K562 (cell line): ENCODE measurements at regions of chr3 and their contacts with region 1.

Region 1: GRCh38 chr3:9749645-9750555 is at the start of gene OGG1:
- DNase-seq: peak; percentile 99 to 100 (median 99)
- ATAC-seq: peak; percentile 98
- H3K4me3 ChIP-seq: peak within 1 kb of the TSS; percentile 69
- H3K27ac ChIP-seq: peak within 1 kb of the TSS; percentile 82
- H3K4me1 ChIP-seq: peaks cover 12 to 31% of the 10 kb centered on the region in 2 experiments; a peak in 4 of 5 replicates
- H3K27me3 ChIP-seq: no peaks in the 10 kb centered on the region
- CTCF ChIP-seq: peak in 2 of 3 experiments; percentile 9 to 19; a peak in 3 of 6 replicates
- EP300 ChIP-seq: no peak; the same call in none of the 2 replicates
- POLR2A ChIP-seq: peak; percentile 87
- RAD21 ChIP-seq: peak in 1 of 2 experiments; percentile 8; a peak in 1 of 4 replicates
- polyA plus RNA-seq, gene OGG1: 6.6 to 12.0 TPM

Region 2: GRCh38 chr3:8713901-8714759 is 1035.8 kb before region 1 on chr3:
- CTCF ChIA-PET with region 1: no interaction called
- POLR2A ChIA-PET with region 1: no interaction called
- in situ Hi-C with region 1: no loop called
- intact Hi-C with region 1: no loop called
- DNase-seq: peak; percentile 53 to 70 (median 68)
- ATAC-seq: peak; percentile 99
- H3K4me3 ChIP-seq: no peak overlapping the region
- H3K27ac ChIP-seq: no peak overlapping the region
- H3K4me1 ChIP-seq: no peaks in the 10 kb centered on the region
- H3K27me3 ChIP-seq: peaks cover 3 to 62% of the 10 kb centered on the region in 2 experiments; a peak in 4 of 5 replicates
- CTCF ChIP-seq: peak; percentile 80 to 89 (median 82)
- EP300 ChIP-seq: no peak
- POLR2A ChIP-seq: no peak
- RAD21 ChIP-seq: peak; percentile 8 to 41; a peak in 3 of 4 replicates

Region 3: GRCh38 chr3:9731206-9732079 is 18.5 kb before region 1 on chr3 and contains the start of gene BRPF1:
- CTCF ChIA-PET with region 1: no interaction called
- POLR2A ChIA-PET with region 1: interaction called, 60 read pairs
- in situ Hi-C with region 1: no loop called
- intact Hi-C with region 1: loop called (anchors 1 kb)
- DNase-seq: peak; percentile 99 to 100 (median 100)
- ATAC-seq: peak; percentile 97
- H3K4me3 ChIP-seq: peak within 1 kb of the TSS; percentile 93
- H3K27ac ChIP-seq: peak within 1 kb of the TSS; percentile 100
- H3K4me1 ChIP-seq: peaks cover 34 to 36% of the 10 kb centered on the region in 2 experiments
- H3K27me3 ChIP-seq: no peaks in the 10 kb centered on the region
- CTCF ChIP-seq: peak in 1 of 3 experiments; percentile 3; a peak in 1 of 6 replicates
- EP300 ChIP-seq: peak; percentile 99
- POLR2A ChIP-seq: peak; percentile 87
- RAD21 ChIP-seq: 0 out of 4 replicates have a peak, but pooled peaks of 1 of the 2 experiments have one; percentile 11
- polyA plus RNA-seq, gene BRPF1: 1.1 to 1.4 TPM

Region 4: DNA sequence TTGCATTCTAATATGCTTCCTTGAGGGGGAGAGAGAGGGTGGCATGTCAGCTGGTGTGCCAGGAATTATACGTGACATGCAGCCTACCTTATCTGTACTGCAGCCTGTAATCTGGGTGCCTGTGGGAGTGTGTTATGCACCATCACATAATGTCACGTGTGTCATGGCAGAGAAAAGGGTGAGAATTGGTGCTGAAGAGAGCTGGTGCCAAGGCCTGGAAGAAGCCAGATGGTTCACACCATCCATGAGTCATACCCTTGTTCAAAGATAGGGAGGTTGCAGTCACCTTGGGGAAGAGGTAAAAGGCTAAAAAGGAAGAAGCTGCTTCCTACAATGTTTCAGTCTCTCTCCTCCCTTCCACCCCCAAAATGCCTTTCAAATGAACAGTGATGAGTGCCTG is 13.1 kb before region 1 on chr3:
- CTCF ChIA-PET with region 1: no interaction called
- POLR2A ChIA-PET with region 1: interaction called, 60 read pairs
- in situ Hi-C with region 1: no loop called
- intact Hi-C with region 1: no loop called
- DNase-seq: no peak
- ATAC-seq: no peak
- H3K4me3 ChIP-seq: no peak overlapping the region
- H3K27ac ChIP-seq: no peak overlapping the region
- H3K4me1 ChIP-seq: peaks cover 12 to 21% of the 10 kb centered on the region in 2 experiments; a peak in 4 of 5 replicates
- H3K27me3 ChIP-seq: no peaks in the 10 kb centered on the region
- CTCF ChIP-seq: no peak
- EP300 ChIP-seq: no peak
- POLR2A ChIP-seq: no peak
- RAD21 ChIP-seq: no peak

Region 5: DNA sequence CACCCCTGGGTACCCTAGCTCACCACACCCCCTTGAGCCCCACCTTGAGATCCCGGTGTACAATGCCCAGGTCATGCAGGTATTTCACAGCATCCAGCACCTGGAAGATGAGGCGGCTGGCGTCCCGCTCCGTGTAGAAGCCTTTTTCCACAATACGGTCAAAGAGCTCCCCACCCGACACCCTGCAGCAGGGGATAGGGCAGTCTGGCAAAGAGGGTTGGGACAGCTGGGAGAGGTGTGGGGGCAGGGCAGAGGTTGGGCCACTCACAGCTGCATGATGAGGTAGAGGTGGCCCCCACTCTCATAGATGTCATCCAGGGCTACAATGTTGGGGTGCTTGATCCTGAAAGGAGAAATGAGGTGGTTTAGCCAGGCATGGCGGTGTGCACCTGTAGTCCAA is 13.0 kb after region 1 on chr3:
- CTCF ChIA-PET with region 1: no interaction called
- POLR2A ChIA-PET with region 1: interaction called, 11 read pairs
- in situ Hi-C with region 1: no loop called
- intact Hi-C with region 1: no loop called
- DNase-seq: no peak
- ATAC-seq: no peak; the same call in 2 of the 3 replicates
- H3K4me3 ChIP-seq: no peak overlapping the region
- H3K27ac ChIP-seq: no peak overlapping the region
- H3K4me1 ChIP-seq: peaks cover 0 to 4% of the 10 kb centered on the region in 2 experiments; a peak in 2 of 5 replicates
- H3K27me3 ChIP-seq: no peaks in the 10 kb centered on the region
- CTCF ChIP-seq: no peak
- EP300 ChIP-seq: no peak
- POLR2A ChIP-seq: no peak
- RAD21 ChIP-seq: no peak